Activated T-helper 1 cell treated with anti-CD3 and anti-CD28 coated beads, Interleukin-12 subunit alpha, Interleukin-12 subunit beta, Interleukin-2, Interleukin-4 antibody, amounts not matched to agents 30 ng/mL and 10 ng/mL and 1 ng/mL, durations not matched to agents 14 hours and 24 hours and 36 hours (primary cell): ENCODE measurements at regions of chr15 and their contacts with region 1.

Region 1: GRCh38 chr15:41116116-41116871 is at the start of gene INO80:
- DNase-seq: peak; percentile 95
- H3K4me3 Mint-ChIP-seq: peak within 1 kb of the TSS; percentile 92
- H3K27ac Mint-ChIP-seq: peak within 1 kb of the TSS; percentile 99
- H3K4me1 Mint-ChIP-seq: peaks cover 20% of the 10 kb centered on the region
- H3K27me3 Mint-ChIP-seq: peaks cover 6% of the 10 kb centered on the region
- total RNA-seq, gene INO80: 39.2 and 39.6 TPM in 2 replicates

Region 2: GRCh38 chr15:40754883-40755811 is 361.1 kb before region 1 on chr15 and contains the start of gene RMDN3:
- intact Hi-C with region 1: loop called (anchors 2 kb)
- DNase-seq: peak; percentile 94
- H3K4me3 Mint-ChIP-seq: peak within 1 kb of the TSS; percentile 91
- H3K27ac Mint-ChIP-seq: peak within 1 kb of the TSS; percentile 97
- H3K4me1 Mint-ChIP-seq: peaks cover 38% of the 10 kb centered on the region
- H3K27me3 Mint-ChIP-seq: no peaks in the 10 kb centered on the region
- total RNA-seq, gene RMDN3: 39.0 and 42.2 TPM in 2 replicates

Region 3: GRCh38 chr15:40960926-40961325 is 155.4 kb before region 1 on chr15:
- intact Hi-C with region 1: no loop called
- DNase-seq: no peak
- H3K4me3 Mint-ChIP-seq: no peak overlapping the region
- H3K27ac Mint-ChIP-seq: no peak overlapping the region
- H3K4me1 Mint-ChIP-seq: peaks cover 15% of the 10 kb centered on the region
- H3K27me3 Mint-ChIP-seq: peaks cover 3% of the 10 kb centered on the region

Region 4: GRCh38 chr15:41150279-41150678 is 34.0 kb after region 1 on chr15:
- intact Hi-C with region 1: loop called (anchors 1 kb)
- DNase-seq: no peak
- H3K4me3 Mint-ChIP-seq: peak overlapping the region; percentile 10
- H3K27ac Mint-ChIP-seq: no peak overlapping the region
- H3K4me1 Mint-ChIP-seq: peaks cover 21% of the 10 kb centered on the region
- H3K27me3 Mint-ChIP-seq: peaks cover 7% of the 10 kb centered on the region

Region 5: DNA sequence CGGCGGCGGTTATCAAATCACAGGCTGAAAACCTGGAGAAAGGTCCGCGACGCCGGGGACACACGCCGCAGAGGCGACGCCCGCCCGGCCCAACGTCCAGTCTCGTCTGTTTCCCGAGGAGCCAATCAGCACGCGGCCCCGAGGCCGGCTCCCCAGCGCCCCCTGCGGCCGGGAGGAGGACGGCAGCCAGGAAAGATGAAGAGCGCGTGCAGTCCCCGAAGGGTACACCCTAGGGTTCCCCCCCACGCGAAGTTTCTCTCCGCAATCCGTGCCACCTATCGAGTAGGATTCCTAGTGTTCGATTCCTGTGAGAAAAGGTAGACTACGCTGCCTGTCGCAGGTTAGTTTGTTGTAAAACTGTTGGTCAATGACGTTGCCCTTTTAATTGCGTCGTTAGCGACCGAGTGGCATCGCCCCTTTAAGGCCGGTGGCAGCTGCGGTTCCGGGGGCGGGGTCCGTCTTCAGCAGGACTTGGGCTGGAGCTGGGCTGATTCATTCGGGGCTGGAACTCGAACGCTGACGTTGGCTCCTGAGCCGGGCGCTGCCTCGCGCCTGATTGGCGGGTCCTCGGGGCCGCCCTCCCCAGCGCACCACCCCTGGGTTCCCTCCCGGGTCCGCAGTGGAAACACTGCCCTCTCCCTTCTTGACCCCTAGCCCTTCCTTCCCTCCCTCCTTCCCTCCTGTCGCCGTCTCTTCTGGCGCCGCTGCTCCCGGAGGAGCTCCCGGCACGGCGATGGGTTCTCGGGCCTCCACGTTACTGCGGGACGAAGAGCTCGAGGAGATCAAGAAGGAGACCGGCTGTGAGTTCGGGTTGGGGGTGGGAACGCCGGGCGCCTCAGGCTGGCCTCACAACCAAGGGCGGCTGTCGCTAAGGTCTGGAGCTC is 114.6 kb after region 1 on chr15 and contains the starts of genes CHP1 and EXD1:
- intact Hi-C with region 1: loop called (anchors 1 kb)
- DNase-seq: peak; percentile 96
- H3K4me3 Mint-ChIP-seq: peak within 1 kb of the TSS; percentile 92
- H3K27ac Mint-ChIP-seq: peak within 1 kb of the TSS; percentile 89
- H3K4me1 Mint-ChIP-seq: peaks cover 23% of the 10 kb centered on the region
- H3K27me3 Mint-ChIP-seq: no peaks in the 10 kb centered on the region
- total RNA-seq, gene CHP1: 43.5 and 55.2 TPM in 2 replicates
- total RNA-seq, gene EXD1: not detected in 2 replicates

Region 6: GRCh38 chr15:41331833-41332787 is 215.8 kb after region 1 on chr15 and contains the start of gene OIP5:
- intact Hi-C with region 1: loop called (anchors 2 kb)
- DNase-seq: peak; percentile 98
- H3K4me3 Mint-ChIP-seq: peak within 1 kb of the TSS; percentile 94
- H3K27ac Mint-ChIP-seq: peak within 1 kb of the TSS; percentile 95
- H3K4me1 Mint-ChIP-seq: peaks cover 33% of the 10 kb centered on the region
- H3K27me3 Mint-ChIP-seq: no peaks in the 10 kb centered on the region
- total RNA-seq, gene OIP5: 15.6 and 17.6 TPM in 2 replicates

Region 7: GRCh38 chr15:41416742-41417406 is 300.6 kb after region 1 on chr15 and contains the start of gene RTF1:
- intact Hi-C with region 1: loop called (anchors 5 kb)
- DNase-seq: peak; percentile 98
- H3K4me3 Mint-ChIP-seq: peak within 1 kb of the TSS; percentile 93
- H3K27ac Mint-ChIP-seq: peak within 1 kb of the TSS; percentile 96
- H3K4me1 Mint-ChIP-seq: peaks cover 40% of the 10 kb centered on the region
- H3K27me3 Mint-ChIP-seq: no peaks in the 10 kb centered on the region
- total RNA-seq, gene RTF1: 41.0 and 44.7 TPM in 2 replicates